T-cell (primary cell): ENCODE measurements at regions of chr9 and their contacts with region 1.

Region 1: GRCh38 chr9:79408617-79409016 is 163.1 kb upstream of the TLE4 start:
- DNase-seq: no peak
- ATAC-seq: no peak
- H3K4me3 ChIP-seq: no peak overlapping the region
- H3K4me3 Mint-ChIP-seq: no peak overlapping the region
- H3K27ac ChIP-seq: no peak overlapping the region
- H3K27ac Mint-ChIP-seq: no peak overlapping the region
- H3K4me1 ChIP-seq: no peaks in the 10 kb centered on the region
- H3K4me1 Mint-ChIP-seq: no peaks in the 10 kb centered on the region
- H3K27me3 ChIP-seq: no peaks in the 10 kb centered on the region
- H3K27me3 Mint-ChIP-seq: peaks cover 4 to 11% of the 10 kb centered on the region in 2 donors

Region 2: DNA sequence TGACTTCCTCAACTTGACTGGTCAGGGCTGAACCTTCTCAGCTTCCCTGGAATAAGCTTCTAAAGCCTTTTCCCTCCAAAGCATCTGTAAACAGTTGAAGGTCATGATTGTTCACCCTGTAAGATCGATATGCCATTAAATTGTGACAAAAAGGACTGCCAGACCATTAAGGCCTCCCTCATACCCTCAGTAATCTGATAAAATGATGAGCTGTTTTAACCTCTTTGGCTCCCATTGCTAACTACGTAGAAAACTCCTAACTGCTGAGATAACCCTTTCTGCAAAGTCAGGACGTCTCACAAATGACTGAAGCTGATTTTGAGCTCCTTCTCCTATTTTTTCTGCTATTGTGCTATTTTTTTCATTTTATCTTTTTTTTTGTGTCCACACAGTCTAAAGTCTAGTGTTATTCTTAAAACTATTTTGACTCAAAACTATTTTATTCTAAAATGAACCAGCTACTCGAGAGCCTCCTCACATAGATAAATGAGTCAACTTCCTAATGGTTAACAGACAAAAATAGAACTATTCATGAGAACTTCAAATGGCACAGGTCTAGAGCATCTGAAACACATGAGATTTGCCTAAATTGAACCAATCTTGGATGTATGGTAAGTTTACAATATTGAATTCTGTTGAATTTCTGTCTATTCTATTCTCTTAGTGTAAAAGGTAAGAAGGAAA is 232.5 kb before region 1 on chr9:
- CTCF ChIA-PET with region 1: no interaction called
- POLR2A ChIA-PET with region 1: no interaction called
- DNase-seq: no peak
- ATAC-seq: no peak
- H3K4me3 ChIP-seq: no peak overlapping the region
- H3K4me3 Mint-ChIP-seq: no peak overlapping the region
- H3K27ac ChIP-seq: no peak overlapping the region
- H3K27ac Mint-ChIP-seq: no peak overlapping the region
- H3K4me1 ChIP-seq: no peaks in the 10 kb centered on the region
- H3K4me1 Mint-ChIP-seq: no peaks in the 10 kb centered on the region
- H3K27me3 ChIP-seq: no peaks in the 10 kb centered on the region
- H3K27me3 Mint-ChIP-seq: peaks cover 0 to 7% of the 10 kb centered on the region in 2 donors

Region 3: GRCh38 chr9:79382468-79382867 is 26.1 kb before region 1 on chr9:
- CTCF ChIA-PET with region 1: no interaction called
- POLR2A ChIA-PET with region 1: interaction called in 1 of 2 experiments, 12 read pairs
- DNase-seq: no peak
- ATAC-seq: no peak
- H3K4me3 ChIP-seq: no peak overlapping the region
- H3K4me3 Mint-ChIP-seq: no peak overlapping the region
- H3K27ac ChIP-seq: no peak overlapping the region
- H3K27ac Mint-ChIP-seq: no peak overlapping the region
- H3K4me1 ChIP-seq: no peaks in the 10 kb centered on the region
- H3K4me1 Mint-ChIP-seq: no peaks in the 10 kb centered on the region
- H3K27me3 ChIP-seq: no peaks in the 10 kb centered on the region
- H3K27me3 Mint-ChIP-seq: peaks cover 0 to 7% of the 10 kb centered on the region in 2 donors